Activated CD8-positive, alpha-beta T cell treated with anti-CD3 and anti-CD28 coated beads for 36 hours (primary cell): ENCODE measurements at regions of chr9 and their contacts with region 1.

Region 1: DNA sequence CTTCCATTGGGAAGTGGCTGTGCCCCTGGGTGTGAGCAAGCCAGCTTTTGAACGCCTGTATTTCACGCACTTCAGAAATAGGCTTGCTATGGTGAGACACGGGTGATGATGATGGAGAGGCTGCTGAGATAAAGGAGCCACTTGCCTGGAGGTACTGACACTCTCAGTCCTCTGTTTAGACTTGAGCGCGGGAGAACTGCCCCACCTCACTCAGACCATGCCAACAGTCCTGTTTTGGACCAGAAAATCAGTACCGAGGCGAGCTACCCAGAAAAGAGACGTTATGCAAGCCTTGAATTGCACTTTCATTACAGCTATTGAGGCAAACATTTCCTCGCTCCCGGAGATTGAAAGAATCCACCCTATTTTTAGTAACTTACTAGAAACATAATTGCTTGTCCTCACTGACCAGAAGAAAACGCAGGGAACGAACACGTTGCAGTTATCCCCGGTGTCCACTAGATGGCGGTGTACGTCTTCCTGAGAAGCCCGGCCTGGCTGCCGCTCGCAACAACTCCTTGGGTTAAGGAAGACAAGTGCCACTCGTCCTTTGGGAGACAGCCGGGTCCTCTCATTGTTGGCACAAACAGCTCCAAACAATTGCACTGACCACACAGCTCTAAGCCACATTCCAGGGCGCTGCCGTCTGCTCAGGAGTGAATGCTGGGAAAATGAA is 142.4 kb downstream of the PSAT1 start:
- DNase-seq: peak; percentile 75
- ATAC-seq: peak; percentile 74
- H3K4me3 Mint-ChIP-seq: no peak overlapping the region
- H3K27ac Mint-ChIP-seq: no peak overlapping the region
- H3K4me1 Mint-ChIP-seq: peaks cover 5% of the 10 kb centered on the region
- H3K27me3 Mint-ChIP-seq: peaks cover 15% of the 10 kb centered on the region
- CTCF ChIP-seq: peak; percentile 92

Region 2: GRCh38 chr9:78089101-78089500 is 350.2 kb before region 1 on chr9:
- CTCF ChIA-PET with region 1: no interaction called
- POLR2A ChIA-PET with region 1: no interaction called
- intact Hi-C with region 1: no loop called
- DNase-seq: no peak
- ATAC-seq: no peak
- H3K4me3 Mint-ChIP-seq: no peak overlapping the region
- H3K27ac Mint-ChIP-seq: no peak overlapping the region
- H3K4me1 Mint-ChIP-seq: no peaks in the 10 kb centered on the region
- H3K27me3 Mint-ChIP-seq: no peaks in the 10 kb centered on the region
- CTCF ChIP-seq: no peak

Region 3: DNA sequence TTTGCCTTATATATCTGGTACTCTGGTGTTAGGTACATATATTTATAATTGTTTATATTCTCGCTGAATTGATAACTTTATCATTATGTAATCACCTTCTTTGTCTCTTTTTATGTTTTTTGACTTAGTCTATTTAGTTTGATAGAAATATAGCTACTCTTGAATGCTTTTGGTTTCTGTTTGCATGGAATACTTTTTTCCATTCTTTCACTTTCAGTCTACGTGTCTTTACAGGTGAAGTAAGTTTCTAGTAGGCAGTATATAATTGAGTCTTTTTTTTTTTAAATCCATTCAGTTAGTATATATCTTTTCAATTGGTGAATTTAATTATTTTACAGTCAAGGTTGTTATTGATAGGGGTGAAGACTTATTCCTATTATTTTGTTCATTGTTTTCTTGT is 10.7 kb before region 1 on chr9:
- CTCF ChIA-PET with region 1: interaction called, 24 read pairs
- POLR2A ChIA-PET with region 1: no interaction called
- intact Hi-C with region 1: no loop called
- DNase-seq: no peak
- ATAC-seq: no peak
- H3K4me3 Mint-ChIP-seq: no peak overlapping the region
- H3K27ac Mint-ChIP-seq: no peak overlapping the region
- H3K4me1 Mint-ChIP-seq: peaks cover 2% of the 10 kb centered on the region
- H3K27me3 Mint-ChIP-seq: no peaks in the 10 kb centered on the region
- CTCF ChIP-seq: no peak

Region 4: DNA sequence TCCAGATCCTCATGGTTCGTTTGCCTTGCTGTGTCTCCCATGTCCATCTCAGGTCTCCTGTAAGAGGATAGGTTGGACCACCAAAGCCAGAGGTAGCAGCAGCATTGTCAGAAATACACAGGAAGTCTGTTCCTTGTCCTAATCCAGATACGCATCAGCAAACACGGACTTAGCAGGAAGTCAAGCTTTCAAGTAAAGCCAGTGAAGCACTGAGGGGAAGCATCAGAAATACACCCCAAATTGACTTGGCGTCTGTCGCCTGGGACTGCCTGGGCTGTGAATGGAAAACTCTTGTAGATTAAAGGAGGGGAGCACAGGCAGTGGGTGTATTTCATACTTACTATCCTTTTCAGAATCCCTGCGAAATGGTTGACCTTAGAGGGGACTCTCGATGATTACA is 28.9 kb after region 1 on chr9:
- CTCF ChIA-PET with region 1: interaction called, 10 read pairs
- POLR2A ChIA-PET with region 1: no interaction called
- intact Hi-C with region 1: no loop called
- DNase-seq: no peak
- ATAC-seq: no peak
- H3K4me3 Mint-ChIP-seq: no peak overlapping the region
- H3K27ac Mint-ChIP-seq: no peak overlapping the region
- H3K4me1 Mint-ChIP-seq: no peaks in the 10 kb centered on the region
- H3K27me3 Mint-ChIP-seq: peaks cover 4% of the 10 kb centered on the region
- CTCF ChIP-seq: no peak

Region 5: DNA sequence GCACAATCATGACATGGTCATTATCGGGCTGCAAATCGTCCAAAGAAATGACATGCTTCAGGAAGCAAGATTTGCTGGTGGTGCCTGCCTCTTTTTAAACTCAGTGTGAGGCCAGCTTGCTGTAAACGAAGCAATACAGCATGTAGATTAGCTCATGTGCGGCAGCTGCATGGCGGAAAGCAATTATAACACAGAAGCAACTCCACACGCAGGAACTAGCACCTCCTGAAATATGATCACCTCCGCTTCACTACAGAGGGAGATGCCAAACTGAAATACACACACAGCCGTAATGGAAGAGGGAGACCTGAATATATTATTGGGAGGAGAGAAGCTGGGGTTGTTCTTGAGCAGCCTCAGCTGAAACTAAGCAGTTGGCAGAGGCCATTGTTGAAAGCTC is 170.1 kb after region 1 on chr9:
- CTCF ChIA-PET with region 1: no interaction called
- POLR2A ChIA-PET with region 1: no interaction called
- intact Hi-C with region 1: no loop called
- DNase-seq: no peak
- ATAC-seq: no peak
- H3K4me3 Mint-ChIP-seq: no peak overlapping the region
- H3K27ac Mint-ChIP-seq: no peak overlapping the region
- H3K4me1 Mint-ChIP-seq: no peaks in the 10 kb centered on the region
- H3K27me3 Mint-ChIP-seq: no peaks in the 10 kb centered on the region
- CTCF ChIP-seq: no peak